GM12878 (cell line): ENCODE measurements at regions of chr10 and their contacts with region 1.

Region 1: DNA sequence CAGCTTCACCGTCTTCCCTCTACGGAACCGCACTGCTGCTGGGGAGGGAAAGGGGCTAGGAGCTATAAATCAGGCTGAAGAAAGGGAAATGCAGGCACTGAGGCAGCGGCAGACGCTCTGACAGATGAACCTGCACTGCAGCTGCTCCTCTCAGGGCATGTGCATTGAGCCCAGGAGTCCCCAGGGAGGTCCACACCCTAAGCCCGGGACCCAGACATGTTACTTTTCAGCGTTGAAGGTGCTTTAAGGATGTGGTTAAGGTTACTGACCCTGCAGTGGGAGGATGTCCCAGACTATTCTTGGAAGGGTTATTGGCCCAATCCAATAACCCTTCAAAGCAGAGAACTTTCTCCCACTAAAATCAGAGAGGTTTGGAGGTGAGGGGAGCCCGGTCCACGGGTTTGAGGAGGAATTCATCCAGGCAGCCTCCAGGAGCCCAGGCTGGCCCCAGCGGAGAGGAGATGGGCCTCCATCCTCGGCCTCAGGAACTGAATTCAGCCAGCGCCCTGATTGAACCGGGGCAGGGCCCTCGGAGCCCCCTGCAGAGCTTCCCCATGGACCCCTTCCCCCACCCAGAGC is 75.4 kb downstream of the ADARB2 start:
- DNase-seq: peak; percentile 34
- ATAC-seq: peak; percentile 83
- H3K4me3 ChIP-seq: no peak overlapping the region
- H3K27ac ChIP-seq: peak overlapping the region; percentile 33
- H3K4me1 ChIP-seq: peaks cover 15% of the 10 kb centered on the region
- H3K27me3 ChIP-seq: no peaks in the 10 kb centered on the region
- CTCF ChIP-seq: no peak
- EP300 ChIP-seq: no peak
- POLR2A ChIP-seq: no peak
- RAD21 ChIP-seq: no peak

Region 2: DNA sequence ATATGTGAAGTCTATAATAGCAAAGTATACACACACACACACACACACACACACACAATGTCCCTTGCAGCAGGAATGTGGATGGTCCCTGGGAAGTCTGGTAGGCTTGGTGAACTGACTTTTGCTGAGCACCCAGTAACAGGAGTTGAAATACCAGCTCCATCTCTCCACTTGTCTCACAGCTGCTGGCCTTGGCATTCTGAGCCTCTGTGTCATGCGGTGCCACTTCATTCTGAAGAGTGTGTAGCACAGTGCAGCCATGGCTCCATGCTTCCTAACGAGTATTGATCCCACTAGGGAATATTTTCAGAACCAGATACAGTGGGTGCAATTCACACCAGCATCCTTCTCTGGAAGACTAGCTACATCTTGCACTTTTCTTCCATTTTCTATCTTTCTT is 117.0 kb before region 1 on chr10:
- CTCF ChIA-PET with region 1: no interaction called
- POLR2A ChIA-PET with region 1: no interaction called
- RAD21 ChIA-PET with region 1: no interaction called
- SMC1A ChIA-PET with region 1: no interaction called
- in situ Hi-C with region 1: no loop called
- intact Hi-C with region 1: no loop called
- DNase-seq: no peak
- ATAC-seq: no peak
- H3K4me3 ChIP-seq: no peak overlapping the region
- H3K27ac ChIP-seq: no peak overlapping the region
- H3K4me1 ChIP-seq: peaks cover 7% of the 10 kb centered on the region
- H3K27me3 ChIP-seq: no peaks in the 10 kb centered on the region
- CTCF ChIP-seq: no peak
- EP300 ChIP-seq: no peak
- POLR2A ChIP-seq: no peak
- RAD21 ChIP-seq: no peak

Region 3: GRCh38 chr10:1648648-1649047 is 13.3 kb before region 1 on chr10:
- CTCF ChIA-PET with region 1: interaction called, 9 read pairs
- POLR2A ChIA-PET with region 1: interaction called, 4 read pairs
- RAD21 ChIA-PET with region 1: interaction called, 4 read pairs
- SMC1A ChIA-PET with region 1: interaction called, 16 read pairs
- in situ Hi-C with region 1: no loop called
- intact Hi-C with region 1: no loop called
- DNase-seq: peak; percentile 25
- ATAC-seq: peak; percentile 92
- H3K4me3 ChIP-seq: no peak overlapping the region
- H3K27ac ChIP-seq: no peak overlapping the region
- H3K4me1 ChIP-seq: peaks cover 3% of the 10 kb centered on the region
- H3K27me3 ChIP-seq: no peaks in the 10 kb centered on the region
- CTCF ChIP-seq: no peak
- EP300 ChIP-seq: no peak
- POLR2A ChIP-seq: no peak
- RAD21 ChIP-seq: no peak

Region 4: DNA sequence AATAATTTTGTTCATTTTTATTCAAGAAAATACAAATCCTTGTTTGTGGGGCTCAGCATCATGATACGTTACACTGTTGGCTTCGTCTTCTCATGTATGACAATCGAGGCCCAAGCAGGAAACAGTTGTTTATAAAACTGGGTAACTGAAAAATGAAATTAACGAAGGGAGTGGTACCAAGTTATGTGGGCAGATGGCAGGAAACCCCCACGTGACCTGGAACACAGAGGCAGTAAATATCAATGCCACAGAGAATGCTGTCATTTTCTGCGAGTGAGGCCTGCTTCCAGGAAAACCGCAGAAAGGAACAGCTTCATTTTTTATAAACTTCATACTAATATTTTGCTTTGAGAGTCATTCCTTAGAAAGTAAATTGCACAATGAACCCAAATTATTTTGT is 276.4 kb after region 1 on chr10:
- CTCF ChIA-PET with region 1: no interaction called
- POLR2A ChIA-PET with region 1: no interaction called
- RAD21 ChIA-PET with region 1: no interaction called
- SMC1A ChIA-PET with region 1: no interaction called
- in situ Hi-C with region 1: no loop called
- intact Hi-C with region 1: no loop called
- DNase-seq: no peak
- ATAC-seq: no peak
- H3K4me3 ChIP-seq: no peak overlapping the region
- H3K27ac ChIP-seq: no peak overlapping the region
- H3K4me1 ChIP-seq: no peaks in the 10 kb centered on the region
- H3K27me3 ChIP-seq: no peaks in the 10 kb centered on the region
- CTCF ChIP-seq: no peak
- EP300 ChIP-seq: no peak
- POLR2A ChIP-seq: no peak
- RAD21 ChIP-seq: no peak